ENCODE measurements at regions of chr9 and their contacts with region 1.

Region 1: GRCh38 chr9:34500623-34501267 is 22.0 kb downstream of the ENHO start:
- DNase-seq: no peak
- H3K4me3 ChIP-seq: no peak overlapping the region
- H3K27me3 ChIP-seq: peaks cover 6% of the 10 kb centered on the region
- CTCF ChIP-seq: peak; percentile 99

Region 2: DNA sequence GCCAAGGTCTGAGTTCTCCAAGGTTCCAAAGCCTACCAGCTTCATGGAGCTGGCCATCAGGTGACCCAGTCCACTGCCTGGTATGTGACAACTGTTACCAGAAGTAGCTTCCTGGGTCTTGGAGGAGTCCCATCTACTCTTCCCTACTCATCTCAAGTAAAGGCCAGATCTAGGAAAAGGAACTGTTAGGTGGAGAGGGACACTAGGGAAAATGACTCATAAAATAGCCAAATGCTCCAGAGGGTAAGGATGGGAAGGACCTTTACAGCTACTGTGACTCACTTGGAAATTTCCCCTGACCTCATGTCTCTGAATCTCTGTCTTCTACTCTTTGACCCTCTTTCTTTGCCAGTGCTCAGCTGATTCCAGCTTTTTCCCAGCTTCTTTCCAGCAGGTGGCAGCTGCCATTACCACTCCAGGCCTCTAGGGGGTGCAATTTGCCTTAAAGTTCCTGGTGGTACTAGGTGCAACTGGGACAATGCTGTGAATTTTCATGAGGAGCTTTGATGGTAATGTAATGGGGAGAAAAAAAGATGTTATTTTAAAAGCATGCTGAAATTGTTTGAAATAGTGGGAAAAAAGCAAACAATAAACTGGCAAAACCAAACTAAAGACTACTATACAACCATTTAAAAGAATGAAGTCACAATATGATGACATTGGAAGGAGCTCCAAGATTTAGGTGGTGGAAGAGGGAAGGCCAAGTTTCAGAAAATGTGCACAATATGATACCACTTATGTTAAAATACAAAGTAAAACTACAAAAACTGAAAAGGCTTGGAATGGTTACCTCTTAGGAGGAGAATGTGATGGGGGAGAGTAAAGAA is 97.0 kb before region 1 on chr9:
- CTCF ChIA-PET with region 1: interaction called, 79 read pairs
- POLR2A ChIA-PET with region 1: no interaction called
- DNase-seq: no peak
- H3K4me3 ChIP-seq: no peak overlapping the region
- H3K27me3 ChIP-seq: no peaks in the 10 kb centered on the region
- CTCF ChIP-seq: peak; percentile 98

Region 3: DNA sequence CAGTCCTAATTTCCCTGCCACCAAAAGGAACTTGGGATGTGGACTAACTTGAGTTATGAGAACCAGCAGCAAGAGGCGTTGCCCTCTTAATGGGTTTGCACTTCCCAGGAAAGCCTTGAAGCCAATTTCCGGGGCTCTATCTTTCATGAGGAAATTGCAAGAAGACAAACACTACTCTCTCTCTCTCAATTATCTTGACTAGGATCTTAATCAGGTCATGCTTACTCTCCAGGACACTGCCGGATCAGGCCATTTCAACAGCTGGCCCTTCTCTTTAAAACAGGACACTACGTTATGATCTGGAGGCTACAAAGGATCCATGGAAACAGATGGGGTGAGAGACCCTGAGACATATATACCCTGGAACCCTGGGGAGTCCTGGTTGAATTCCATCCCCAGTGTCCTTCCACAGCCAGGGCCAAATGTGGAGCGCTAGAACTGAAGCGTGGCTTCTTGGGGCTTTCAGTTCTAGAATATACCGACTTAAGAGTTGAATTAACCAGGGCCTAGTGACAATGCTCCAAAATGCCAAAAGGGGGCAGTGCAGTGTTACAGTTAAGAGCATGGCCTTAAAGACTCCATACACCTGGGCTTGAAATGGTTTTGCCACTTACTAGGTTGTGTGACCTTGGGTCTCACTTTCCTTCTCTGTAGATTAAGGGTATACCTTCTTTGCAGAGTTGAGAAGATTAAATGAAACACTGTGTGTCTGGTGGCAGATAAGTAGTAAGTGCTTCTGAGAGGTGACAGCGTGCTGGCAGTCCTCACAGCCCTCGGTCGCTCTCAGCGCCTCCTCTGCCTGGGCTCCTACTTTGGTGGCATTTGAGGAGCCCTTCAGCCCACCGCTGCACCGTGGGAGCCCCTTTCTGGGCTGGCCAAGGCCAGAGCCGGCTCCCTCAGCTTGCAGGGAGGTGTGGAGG is 63.5 kb before region 1 on chr9:
- CTCF ChIA-PET with region 1: interaction called, 37 read pairs
- POLR2A ChIA-PET with region 1: no interaction called
- DNase-seq: no peak
- H3K4me3 ChIP-seq: no peak overlapping the region
- H3K27me3 ChIP-seq: no peaks in the 10 kb centered on the region
- CTCF ChIP-seq: peak; percentile 71

Region 4: GRCh38 chr9:34451545-34451944 is 49.2 kb before region 1 on chr9:
- CTCF ChIA-PET with region 1: interaction called, 37 read pairs
- POLR2A ChIA-PET with region 1: no interaction called
- DNase-seq: no peak
- H3K4me3 ChIP-seq: no peak overlapping the region
- H3K27me3 ChIP-seq: no peaks in the 10 kb centered on the region
- CTCF ChIP-seq: no peak

Region 5: GRCh38 chr9:34546834-34547827 is 46.4 kb after region 1 on chr9:
- CTCF ChIA-PET with region 1: interaction called, 11 read pairs
- POLR2A ChIA-PET with region 1: no interaction called
- DNase-seq: no peak
- H3K4me3 ChIP-seq: no peak overlapping the region
- H3K27me3 ChIP-seq: peaks cover 5% of the 10 kb centered on the region
- CTCF ChIP-seq: peak; percentile 71